Sciatic nerve (tissue), 2 donors: ENCODE measurements at regions of chr4 and their contacts with region 1.

Region 1: DNA sequence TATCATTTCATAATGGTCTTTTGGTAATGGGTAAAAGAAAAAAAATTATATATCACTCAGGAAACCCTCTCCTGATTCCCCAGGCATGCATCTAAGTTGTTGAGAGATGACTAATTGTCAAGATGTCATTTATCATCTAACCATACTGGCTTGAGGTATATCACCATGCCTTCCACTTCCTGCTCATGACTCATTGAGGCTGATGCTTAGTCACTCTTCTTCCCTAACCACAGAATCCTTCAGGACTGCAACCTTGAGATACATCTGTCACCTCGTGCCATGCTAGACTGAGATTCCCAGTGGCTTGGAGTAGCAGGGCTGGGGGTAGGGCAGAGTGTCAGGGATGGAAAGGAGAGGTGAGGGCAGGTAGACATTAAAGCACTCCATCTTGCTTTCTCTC is 782.5 kb upstream of the INTU start:
- DNase-seq: no peak
- ATAC-seq: no peak

Region 2: GRCh38 chr4:126888968-126889367 is 38.7 kb after region 1 on chr4:
- intact Hi-C with region 1: loop called (anchors 2 kb)
- DNase-seq: no peak
- ATAC-seq: no peak

Region 3: GRCh38 chr4:127113852-127114362 is 263.6 kb after region 1 on chr4:
- intact Hi-C with region 1: no loop called
- DNase-seq: no peak
- ATAC-seq: no peak